ENCODE measurements at regions of chr11 and their contacts with region 1.

Region 1: DNA sequence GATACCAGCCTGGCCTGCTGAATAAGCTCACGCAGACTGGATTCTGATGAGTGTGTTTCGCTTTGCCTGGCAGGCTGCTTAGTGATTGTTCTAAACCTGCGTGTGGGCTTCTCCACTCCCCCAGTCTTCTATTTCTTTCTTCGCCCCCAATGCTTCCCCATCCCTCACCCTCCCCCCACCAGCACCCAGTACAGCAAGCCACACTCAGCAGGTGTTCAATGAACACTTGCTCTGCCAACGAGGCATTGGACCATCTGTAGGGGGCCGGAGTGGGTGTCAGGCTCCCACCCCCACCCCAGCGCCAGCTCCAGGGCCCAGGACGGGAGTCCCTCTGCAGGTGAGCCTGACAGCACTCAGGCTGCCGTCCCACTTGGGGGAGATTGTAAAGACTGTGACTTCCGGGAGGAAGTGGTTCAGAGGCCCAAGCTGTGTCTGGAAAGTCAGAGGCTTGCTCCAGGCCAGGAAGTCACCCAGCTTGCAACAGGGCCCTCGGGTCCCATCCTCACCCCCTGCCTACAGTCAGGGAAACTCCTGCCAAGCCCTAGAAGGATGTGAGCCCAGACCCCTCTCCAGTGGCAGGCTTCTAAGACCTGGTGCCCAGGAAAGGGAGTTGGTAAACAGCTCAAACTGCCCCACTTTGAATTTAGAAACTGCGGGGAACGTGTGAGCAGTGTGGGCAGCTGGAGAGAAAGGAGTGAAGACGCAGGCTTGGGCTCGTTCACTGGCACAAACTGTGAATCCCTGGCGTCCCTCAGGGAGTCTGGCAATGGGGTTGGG is 66.3 kb upstream of the PRDM11 start:
- DNase-seq: peak; percentile 54 to 76 (median 64)
- H3K4me3 ChIP-seq: peak overlapping the region in 1 of 2 donors; percentile 15
- H3K4me3 Mint-ChIP-seq: peak overlapping the region; percentile 45 to 82 (median 69)
- H3K27ac ChIP-seq: peak overlapping the region; percentile 56
- H3K27ac Mint-ChIP-seq: peak overlapping the region; percentile 83 to 96 (median 91)
- H3K4me1 ChIP-seq: peaks cover 38% of the 10 kb centered on the region
- H3K4me1 Mint-ChIP-seq: peaks cover 31 to 61% (median 48%) of the 10 kb centered on the region in 4 donors
- H3K27me3 ChIP-seq: no peaks in the 10 kb centered on the region
- H3K27me3 Mint-ChIP-seq: no peaks in the 10 kb centered on the region

Region 2: DNA sequence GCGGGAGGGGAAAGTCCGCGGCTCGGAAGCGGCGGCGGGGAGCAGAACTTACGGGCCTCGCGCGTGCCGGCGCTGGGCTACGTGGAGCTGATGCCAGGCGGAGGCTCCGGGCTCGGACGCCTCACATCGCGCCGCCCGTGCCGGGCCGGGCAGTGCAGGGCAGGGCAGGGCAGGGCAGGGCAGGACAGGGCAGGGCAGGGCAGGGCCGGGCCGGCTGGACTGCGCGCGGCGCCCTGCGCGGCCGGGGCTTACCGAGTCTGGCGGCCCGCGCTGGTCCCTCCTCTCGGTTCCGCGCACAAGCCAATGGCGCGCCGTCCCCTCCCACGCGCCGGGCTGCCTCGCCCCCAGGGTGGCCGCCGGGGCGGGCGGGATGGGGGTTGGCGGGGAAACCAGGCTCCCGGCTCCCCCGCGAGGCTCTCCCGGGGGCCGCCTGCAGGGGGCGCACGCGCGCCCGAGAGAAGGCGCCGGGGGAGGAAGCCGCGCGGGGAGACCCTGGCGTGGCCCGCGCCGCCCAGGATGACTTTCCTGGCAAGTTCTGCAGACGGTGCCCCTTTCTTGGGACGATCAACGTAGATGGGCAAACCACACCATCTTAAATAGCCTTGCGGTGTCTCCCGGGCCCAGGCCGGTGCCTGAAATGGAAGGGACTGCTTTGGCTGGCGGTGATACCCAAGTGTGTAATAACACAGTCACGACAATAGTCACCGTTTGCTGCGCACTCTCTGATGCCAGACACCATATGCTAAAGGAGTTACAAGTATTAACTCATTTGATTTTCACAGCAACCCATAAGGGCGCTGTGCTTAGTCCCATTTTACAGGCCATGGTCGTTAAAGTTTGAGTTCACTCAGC is 129.3 kb before region 1 on chr11 and contains the start of gene TP53I11:
- CTCF ChIA-PET with region 1: interaction called, 3 read pairs
- POLR2A ChIA-PET with region 1: interaction called, 6 read pairs
- intact Hi-C with region 1: loop called (anchors 5 kb)
- DNase-seq: peak; percentile 53 to 57 (median 53)
- H3K4me3 ChIP-seq: peak within 1 kb of the TSS; percentile 36 to 59
- H3K4me3 Mint-ChIP-seq: peak within 1 kb of the TSS; percentile 71 to 87 (median 79)
- H3K27ac ChIP-seq: peak within 1 kb of the TSS; percentile 26
- H3K27ac Mint-ChIP-seq: peak within 1 kb of the TSS in 4 of 7 donors; percentile 14 to 61 (median 42)
- H3K4me1 ChIP-seq: peaks cover 3% of the 10 kb centered on the region
- H3K4me1 Mint-ChIP-seq: peaks cover 0 to 14% (median 3%) of the 10 kb centered on the region in 4 donors
- H3K27me3 ChIP-seq: no peaks in the 10 kb centered on the region
- H3K27me3 Mint-ChIP-seq: no peaks in the 10 kb centered on the region
- total RNA-seq, gene TP53I11: 4.0 to 7.0 TPM

Region 3: GRCh38 chr11:45005104-45005503 is 75.0 kb before region 1 on chr11:
- CTCF ChIA-PET with region 1: no interaction called
- POLR2A ChIA-PET with region 1: no interaction called
- intact Hi-C with region 1: no loop called
- DNase-seq: no peak
- H3K4me3 ChIP-seq: no peak overlapping the region
- H3K4me3 Mint-ChIP-seq: no peak overlapping the region
- H3K27ac ChIP-seq: no peak overlapping the region
- H3K27ac Mint-ChIP-seq: no peak overlapping the region
- H3K4me1 ChIP-seq: no peaks in the 10 kb centered on the region
- H3K4me1 Mint-ChIP-seq: peaks cover 0 to 2% (median 0%) of the 10 kb centered on the region in 4 donors
- H3K27me3 ChIP-seq: no peaks in the 10 kb centered on the region
- H3K27me3 Mint-ChIP-seq: peaks cover 0 to 2% of the 10 kb centered on the region in 2 donors